CD8-positive, alpha-beta T cell (primary cell): ENCODE measurements at regions of chr1 and their contacts with region 1.

Region 1: DNA sequence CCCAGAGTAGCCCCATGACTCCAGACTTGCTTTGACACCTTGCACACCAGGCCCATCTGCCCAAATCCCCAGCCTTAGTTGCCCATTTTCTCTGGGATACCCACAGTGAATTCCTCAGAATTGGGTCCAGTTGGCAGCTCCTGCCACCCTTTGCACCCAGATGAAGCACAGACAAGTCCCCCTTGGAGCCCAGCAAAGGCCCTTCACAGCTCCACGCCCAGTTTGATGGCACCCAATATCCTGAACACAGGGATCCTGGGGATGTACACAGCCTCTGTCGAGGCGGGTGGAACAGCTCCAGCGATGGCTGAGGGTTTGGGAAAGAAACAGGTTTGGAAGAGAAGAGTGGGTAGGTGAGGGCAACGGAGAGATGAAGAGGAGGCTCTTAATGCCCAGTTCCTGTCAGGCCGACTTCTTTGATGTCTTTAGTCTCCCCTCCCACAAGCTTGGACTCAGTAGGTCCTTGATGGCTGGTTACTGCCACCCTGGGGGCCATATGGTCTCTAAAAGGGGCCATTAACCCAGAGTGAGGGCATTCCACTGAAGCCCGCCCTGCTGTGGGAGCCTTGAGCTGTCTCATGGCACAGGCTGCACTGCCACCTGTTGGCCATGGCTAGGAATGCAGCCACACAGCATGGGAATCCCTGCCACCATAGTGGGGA is 21.7 kb downstream of the TMEM53 start:
- DNase-seq: peak; percentile 57 to 85 (median 78)
- ATAC-seq: peak; percentile 99
- H3K4me3 ChIP-seq: no peak overlapping the region
- H3K4me3 Mint-ChIP-seq: no peak overlapping the region
- H3K27ac ChIP-seq: no peak overlapping the region
- H3K27ac Mint-ChIP-seq: peak overlapping the region; percentile 57
- H3K4me1 ChIP-seq: no peaks in the 10 kb centered on the region
- H3K4me1 Mint-ChIP-seq: no peaks in the 10 kb centered on the region
- H3K27me3 ChIP-seq: no peaks in the 10 kb centered on the region
- H3K27me3 Mint-ChIP-seq: no peaks in the 10 kb centered on the region
- CTCF ChIP-seq: peak; percentile 85

Region 2: DNA sequence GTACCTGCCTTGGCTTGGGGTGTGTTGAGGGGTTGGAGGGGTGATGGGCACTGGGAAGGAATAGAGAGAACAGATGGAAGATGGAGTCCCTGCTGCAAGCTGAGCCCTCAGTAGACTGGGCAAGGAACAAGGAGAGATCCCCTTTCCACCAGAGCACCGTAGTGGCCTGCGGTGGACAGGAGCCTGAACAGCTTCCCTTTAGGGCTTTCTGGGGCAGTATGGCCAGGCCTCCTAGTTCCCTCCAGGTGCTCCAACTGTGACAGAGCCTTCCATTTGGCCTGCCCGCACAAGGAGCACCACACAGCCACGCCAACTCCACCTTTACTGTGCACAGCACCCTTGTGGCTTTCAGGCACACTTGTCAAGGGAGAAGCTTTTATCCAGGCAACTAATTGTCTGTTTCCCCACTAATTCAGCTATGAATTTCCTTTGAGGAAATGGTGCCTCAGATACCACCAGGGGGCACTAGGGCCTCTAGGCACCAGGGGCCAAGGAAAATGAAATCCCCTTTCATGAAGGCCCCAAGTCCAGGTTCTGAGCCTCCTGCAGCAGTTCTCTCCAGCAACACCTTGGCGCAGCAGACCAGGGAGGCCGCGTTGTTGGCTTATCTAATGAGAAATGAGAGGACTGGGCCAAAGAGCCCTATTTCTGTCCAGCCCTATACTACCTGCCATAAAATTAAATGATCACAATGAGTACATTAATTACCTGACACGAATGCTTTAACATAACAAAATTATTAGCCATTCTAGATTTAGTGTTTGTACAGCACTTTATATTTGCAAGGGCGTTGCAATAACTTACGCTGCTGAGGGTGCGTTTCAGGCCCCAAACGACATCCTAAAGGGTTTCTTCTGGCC is 274.4 kb before region 1 on chr1:
- CTCF ChIA-PET with region 1: interaction called, 46 read pairs
- POLR2A ChIA-PET with region 1: no interaction called
- intact Hi-C with region 1: loop called (anchors 1 kb)
- DNase-seq: peak; percentile 5 to 71 (median 51)
- ATAC-seq: peak; percentile 34
- H3K4me3 ChIP-seq: no peak overlapping the region
- H3K4me3 Mint-ChIP-seq: no peak overlapping the region
- H3K27ac ChIP-seq: no peak overlapping the region
- H3K27ac Mint-ChIP-seq: no peak overlapping the region
- H3K4me1 ChIP-seq: no peaks in the 10 kb centered on the region
- H3K4me1 Mint-ChIP-seq: no peaks in the 10 kb centered on the region
- H3K27me3 ChIP-seq: no peaks in the 10 kb centered on the region
- H3K27me3 Mint-ChIP-seq: no peaks in the 10 kb centered on the region
- CTCF ChIP-seq: peak; percentile 59

Region 3: GRCh38 chr1:44594871-44595746 is 57.5 kb before region 1 on chr1:
- CTCF ChIA-PET with region 1: interaction called, 12 read pairs
- POLR2A ChIA-PET with region 1: no interaction called
- intact Hi-C with region 1: no loop called
- DNase-seq: peak; percentile 50 to 85 (median 77)
- ATAC-seq: peak; percentile 81
- H3K4me3 ChIP-seq: no peak overlapping the region
- H3K4me3 Mint-ChIP-seq: no peak overlapping the region
- H3K27ac ChIP-seq: no peak overlapping the region
- H3K27ac Mint-ChIP-seq: no peak overlapping the region
- H3K4me1 ChIP-seq: no peaks in the 10 kb centered on the region
- H3K4me1 Mint-ChIP-seq: no peaks in the 10 kb centered on the region
- H3K27me3 ChIP-seq: no peaks in the 10 kb centered on the region
- H3K27me3 Mint-ChIP-seq: peaks cover 8% of the 10 kb centered on the region
- CTCF ChIP-seq: peak; percentile 85

Region 4: GRCh38 chr1:44609412-44609767 is 43.2 kb before region 1 on chr1:
- CTCF ChIA-PET with region 1: interaction called, 78 read pairs
- POLR2A ChIA-PET with region 1: interaction called, 4 read pairs
- intact Hi-C with region 1: loop called (anchors 1 kb)
- DNase-seq: peak in 8 of 9 experiments; percentile 5 to 60 (median 38)
- ATAC-seq: no peak
- H3K4me3 ChIP-seq: no peak overlapping the region
- H3K4me3 Mint-ChIP-seq: no peak overlapping the region
- H3K27ac ChIP-seq: no peak overlapping the region
- H3K27ac Mint-ChIP-seq: no peak overlapping the region
- H3K4me1 ChIP-seq: no peaks in the 10 kb centered on the region
- H3K4me1 Mint-ChIP-seq: no peaks in the 10 kb centered on the region
- H3K27me3 ChIP-seq: no peaks in the 10 kb centered on the region
- H3K27me3 Mint-ChIP-seq: peaks cover 2% of the 10 kb centered on the region
- CTCF ChIP-seq: no peak

Region 5: GRCh38 chr1:44631647-44632539 is 20.7 kb before region 1 on chr1:
- CTCF ChIA-PET with region 1: interaction called, 54 read pairs
- POLR2A ChIA-PET with region 1: interaction called, 19 read pairs
- intact Hi-C with region 1: loop called in 1 of 2 experiments (anchors 2 kb)
- DNase-seq: peak; percentile 73 to 95 (median 88)
- ATAC-seq: peak; percentile 75
- H3K4me3 ChIP-seq: peak overlapping the region; percentile 55 to 82
- H3K4me3 Mint-ChIP-seq: peak overlapping the region; percentile 90
- H3K27ac ChIP-seq: peak overlapping the region; percentile 86 to 97
- H3K27ac Mint-ChIP-seq: peak overlapping the region; percentile 98
- H3K4me1 ChIP-seq: peaks cover 20% of the 10 kb centered on the region
- H3K4me1 Mint-ChIP-seq: peaks cover 48% of the 10 kb centered on the region
- H3K27me3 ChIP-seq: no peaks in the 10 kb centered on the region
- H3K27me3 Mint-ChIP-seq: no peaks in the 10 kb centered on the region
- CTCF ChIP-seq: no peak

Region 6: DNA sequence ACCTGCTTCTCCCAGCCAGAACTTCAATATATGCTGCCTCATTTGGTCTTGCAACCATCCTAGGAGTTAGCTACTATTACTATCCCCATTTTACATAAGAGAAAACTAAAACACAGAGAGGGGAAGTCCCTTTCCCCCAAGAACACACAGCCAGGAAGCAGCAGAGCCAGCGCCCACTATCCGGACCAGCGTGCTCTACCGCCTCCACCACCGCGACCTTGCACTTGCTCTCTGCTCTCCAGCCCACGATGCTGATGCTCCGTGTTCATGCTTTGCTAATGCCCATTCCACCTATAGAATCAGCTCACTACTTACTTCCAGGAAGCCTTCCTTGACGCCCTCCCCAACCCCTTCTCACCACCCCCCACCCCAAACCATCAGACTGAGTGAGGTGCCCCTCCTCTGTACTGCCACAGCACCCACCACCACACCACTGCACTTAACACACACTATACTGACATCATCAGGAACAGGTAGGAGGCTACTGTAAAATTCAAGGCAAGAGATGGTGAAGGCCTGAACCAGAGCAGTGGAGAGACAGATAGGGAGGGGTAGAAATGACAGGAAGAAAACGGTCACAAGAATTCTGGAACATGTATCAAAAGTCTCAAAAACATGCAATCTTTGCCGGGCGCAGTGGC is 12.3 kb after region 1 on chr1:
- CTCF ChIA-PET with region 1: interaction called, 28 read pairs
- POLR2A ChIA-PET with region 1: interaction called, 3 read pairs
- intact Hi-C with region 1: no loop called
- DNase-seq: peak in 1 of 9 experiments; percentile 42
- ATAC-seq: peak; percentile 65
- H3K4me3 ChIP-seq: no peak overlapping the region
- H3K4me3 Mint-ChIP-seq: peak overlapping the region; percentile 29
- H3K27ac ChIP-seq: no peak overlapping the region
- H3K27ac Mint-ChIP-seq: peak overlapping the region; percentile 49
- H3K4me1 ChIP-seq: peaks cover 13% of the 10 kb centered on the region
- H3K4me1 Mint-ChIP-seq: peaks cover 13% of the 10 kb centered on the region
- H3K27me3 ChIP-seq: no peaks in the 10 kb centered on the region
- H3K27me3 Mint-ChIP-seq: no peaks in the 10 kb centered on the region
- CTCF ChIP-seq: no peak

Region 7: GRCh38 chr1:45322486-45323040 is 670.0 kb after region 1 on chr1:
- CTCF ChIA-PET with region 1: no interaction called
- POLR2A ChIA-PET with region 1: no interaction called
- intact Hi-C with region 1: no loop called
- DNase-seq: no peak
- ATAC-seq: no peak
- H3K4me3 ChIP-seq: no peak overlapping the region
- H3K4me3 Mint-ChIP-seq: no peak overlapping the region
- H3K27ac ChIP-seq: no peak overlapping the region
- H3K27ac Mint-ChIP-seq: no peak overlapping the region
- H3K4me1 ChIP-seq: peaks cover 9% of the 10 kb centered on the region
- H3K4me1 Mint-ChIP-seq: peaks cover 4% of the 10 kb centered on the region
- H3K27me3 ChIP-seq: no peaks in the 10 kb centered on the region
- H3K27me3 Mint-ChIP-seq: no peaks in the 10 kb centered on the region
- CTCF ChIP-seq: no peak